ENCODE measurements at regions of chr11 and their contacts with region 1.

Region 1: DNA sequence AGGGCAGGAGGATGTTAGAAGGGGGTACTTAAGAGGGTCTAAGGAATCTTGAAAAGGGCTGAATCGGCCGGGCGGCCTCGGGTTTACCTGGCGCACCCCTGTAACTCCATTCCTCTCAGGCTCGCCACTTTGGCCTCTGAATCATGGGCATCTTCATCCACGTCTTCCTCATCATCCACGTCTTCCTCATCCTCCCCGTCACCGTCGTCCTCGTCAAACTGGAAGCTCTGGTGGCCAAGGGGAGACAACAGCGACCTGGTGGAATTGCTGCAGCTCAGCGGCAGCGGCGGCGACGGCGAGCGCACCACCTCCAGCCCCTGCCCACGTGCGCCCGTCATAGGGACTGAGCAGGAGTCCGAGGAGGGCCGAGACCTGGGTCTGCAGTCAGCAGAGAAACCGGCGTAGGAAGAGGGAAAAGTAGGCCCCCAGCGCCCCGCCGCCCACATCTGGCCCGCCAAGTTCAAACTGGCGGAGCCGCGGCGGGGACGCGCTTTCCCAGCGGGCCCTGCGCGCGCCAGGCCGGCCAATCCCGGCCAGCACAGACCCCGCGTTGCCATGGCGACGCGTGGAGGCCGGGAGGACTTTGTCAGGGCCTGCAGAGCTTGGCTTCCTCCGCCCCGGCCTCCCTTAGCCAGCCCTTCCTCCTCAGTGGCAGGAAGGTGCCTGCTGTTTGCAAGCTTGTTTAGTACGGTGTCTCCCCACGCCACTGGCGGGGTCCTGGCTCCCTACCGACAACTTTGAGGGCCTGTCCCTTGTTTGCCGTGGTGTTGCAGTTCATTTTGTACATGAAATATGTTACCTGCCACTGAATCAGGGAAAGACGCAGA is at the start of gene CCDC34:
- DNase-seq: peak; percentile 86
- H3K4me3 Mint-ChIP-seq: peak within 1 kb of the TSS; percentile 93
- H3K27ac Mint-ChIP-seq: peak within 1 kb of the TSS; percentile 81
- H3K4me1 Mint-ChIP-seq: peaks cover 32% of the 10 kb centered on the region
- H3K27me3 Mint-ChIP-seq: peaks cover 6% of the 10 kb centered on the region
- total RNA-seq, gene CCDC34: 10.4 and 10.6 TPM in 2 replicates

Region 2: GRCh38 chr11:27296497-27296896 is 66.5 kb before region 1 on chr11:
- intact Hi-C with region 1: loop called (anchors 2 kb)
- DNase-seq: no peak
- H3K4me3 Mint-ChIP-seq: no peak overlapping the region
- H3K27ac Mint-ChIP-seq: no peak overlapping the region
- H3K4me1 Mint-ChIP-seq: no peaks in the 10 kb centered on the region
- H3K27me3 Mint-ChIP-seq: peaks cover 3% of the 10 kb centered on the region

Region 3: DNA sequence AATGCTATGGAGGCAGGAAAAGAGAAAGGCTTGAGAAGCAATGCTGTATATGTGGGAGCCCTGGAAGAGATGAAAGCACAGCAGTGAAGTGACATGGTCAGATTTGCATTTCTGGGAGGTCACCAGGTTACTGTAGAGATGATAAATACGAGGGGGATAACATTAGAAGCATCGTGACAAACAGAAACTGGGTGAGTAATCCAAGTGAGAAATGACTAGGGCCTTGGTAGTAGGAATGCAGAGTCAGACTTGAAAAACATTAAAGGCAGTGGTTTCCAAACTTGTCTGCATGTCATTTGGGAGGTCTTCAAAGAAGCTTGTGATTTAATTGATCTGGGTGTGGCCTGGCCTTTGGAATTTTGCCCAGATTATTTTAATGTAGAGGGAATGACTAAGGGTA is 43.9 kb before region 1 on chr11:
- intact Hi-C with region 1: loop called (anchors 2 kb)
- DNase-seq: no peak
- H3K4me3 Mint-ChIP-seq: no peak overlapping the region
- H3K27ac Mint-ChIP-seq: no peak overlapping the region
- H3K4me1 Mint-ChIP-seq: no peaks in the 10 kb centered on the region
- H3K27me3 Mint-ChIP-seq: no peaks in the 10 kb centered on the region

Region 4: DNA sequence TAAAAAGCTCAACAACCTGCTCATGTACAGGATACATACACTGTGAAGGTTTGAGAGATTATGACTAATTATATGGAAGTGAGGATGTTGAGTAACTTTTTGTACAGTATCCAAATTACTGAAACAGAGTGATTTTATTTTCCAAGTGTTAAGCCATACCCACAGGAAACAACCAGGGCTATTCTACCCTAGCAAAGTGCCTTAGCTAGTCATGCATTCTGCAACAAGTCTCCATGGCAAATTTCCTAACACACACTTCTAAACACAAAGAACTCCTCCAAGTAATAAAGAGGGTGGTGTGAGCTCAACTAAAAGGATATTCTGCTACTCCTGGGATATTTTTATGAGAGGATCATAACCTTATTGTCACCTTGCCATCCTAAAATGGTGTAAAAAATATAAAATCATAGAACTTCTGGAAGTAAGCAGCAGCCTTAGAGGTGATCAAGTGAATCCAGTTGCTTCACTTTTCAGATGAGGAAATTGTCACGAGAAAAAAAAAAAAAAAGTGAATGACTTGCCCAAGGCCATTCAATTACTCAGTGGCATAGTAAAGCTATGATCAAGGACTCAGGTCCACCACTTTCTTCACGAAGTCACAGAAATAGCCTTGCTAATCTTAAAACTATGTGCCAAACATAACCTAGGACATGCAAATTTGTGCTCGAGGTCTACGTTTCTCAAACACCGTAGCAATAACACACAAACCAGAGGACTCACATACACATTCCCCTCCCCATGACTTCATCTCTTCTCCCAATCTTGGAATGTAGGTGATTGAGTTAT is 105.4 kb after region 1 on chr11:
- intact Hi-C with region 1: no loop called
- DNase-seq: no peak
- H3K4me3 Mint-ChIP-seq: no peak overlapping the region
- H3K27ac Mint-ChIP-seq: no peak overlapping the region
- H3K4me1 Mint-ChIP-seq: peaks cover 6% of the 10 kb centered on the region
- H3K27me3 Mint-ChIP-seq: peaks cover 39% of the 10 kb centered on the region

Region 5: GRCh38 chr11:27506200-27507182 is 143.5 kb after region 1 on chr11 and contains the start of gene LIN7C:
- intact Hi-C with region 1: loop called (anchors 1 kb)
- DNase-seq: peak; percentile 81
- H3K4me3 Mint-ChIP-seq: peak within 1 kb of the TSS; percentile 100
- H3K27ac Mint-ChIP-seq: peak within 1 kb of the TSS; percentile 100
- H3K4me1 Mint-ChIP-seq: peaks cover 45% of the 10 kb centered on the region
- H3K27me3 Mint-ChIP-seq: no peaks in the 10 kb centered on the region
- total RNA-seq, gene LIN7C: 33.8 and 35.8 TPM in 2 replicates

Region 6: GRCh38 chr11:28107748-28108618 is 745.0 kb after region 1 on chr11 and contains the starts of genes KIF18A and METTL15:
- intact Hi-C with region 1: loop called (anchors 5 kb)
- DNase-seq: peak; percentile 99
- H3K4me3 Mint-ChIP-seq: peak within 1 kb of the TSS; percentile 97
- H3K27ac Mint-ChIP-seq: peak within 1 kb of the TSS; percentile 99
- H3K4me1 Mint-ChIP-seq: peaks cover 65% of the 10 kb centered on the region
- H3K27me3 Mint-ChIP-seq: no peaks in the 10 kb centered on the region
- total RNA-seq, gene KIF18A: 13.1 and 15.4 TPM in 2 replicates
- total RNA-seq, gene METTL15: 17.1 and 18.0 TPM in 2 replicates

Measured in activated T-helper 1 cell treated with anti-CD3 and anti-CD28 coated beads, Interleukin-12 subunit alpha, Interleukin-12 subunit beta, Interleukin-2, Interleukin-4 antibody, amounts not matched to agents 30 ng/mL and 10 ng/mL and 1 ng/mL, durations not matched to agents 14 hours and 24 hours and 36 hours (primary cell).